ENCODE measurements at regions of chr19 and their contacts with region 1.

Region 1: DNA sequence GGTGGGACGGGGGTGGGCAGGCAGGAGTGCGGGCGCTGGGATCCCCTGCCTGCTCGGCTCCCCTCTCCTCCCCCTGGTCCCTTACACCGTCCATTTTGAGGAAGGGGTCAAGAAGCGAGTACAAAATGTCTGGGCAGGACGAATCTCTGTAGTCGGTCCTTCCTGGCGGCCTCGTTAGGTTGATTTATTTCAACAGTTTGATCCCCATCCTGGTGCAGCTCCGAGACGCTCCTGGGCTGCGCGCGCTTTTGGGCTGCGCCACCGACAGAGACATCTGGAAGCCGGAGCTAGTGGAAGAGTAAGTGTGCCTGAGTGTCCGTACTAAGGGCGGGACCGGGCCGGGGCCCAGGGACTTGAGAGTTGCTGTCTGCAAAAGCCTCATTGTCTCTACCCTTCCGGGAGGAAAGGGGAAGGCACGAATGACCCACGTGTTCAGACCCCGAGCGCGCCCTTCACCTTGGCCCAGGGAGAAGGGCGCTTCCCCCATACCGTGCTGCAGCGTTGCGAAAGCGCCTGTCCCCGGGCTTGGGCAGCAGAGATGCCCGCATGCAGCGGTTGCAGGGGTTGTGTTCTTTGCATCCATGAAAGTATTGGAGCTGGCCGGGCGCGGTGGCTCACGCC is 1.8 kb downstream of the ZNF114 start:
- DNase-seq: peak; percentile 47
- H3K4me3 ChIP-seq: peak overlapping the region; percentile 28 to 49 (median 45)
- H3K27ac ChIP-seq: peak overlapping the region; percentile 91
- H3K4me1 ChIP-seq: peaks cover 22% of the 10 kb centered on the region
- H3K27me3 ChIP-seq: no peaks in the 10 kb centered on the region
- CTCF ChIP-seq: no peak

Region 2: DNA sequence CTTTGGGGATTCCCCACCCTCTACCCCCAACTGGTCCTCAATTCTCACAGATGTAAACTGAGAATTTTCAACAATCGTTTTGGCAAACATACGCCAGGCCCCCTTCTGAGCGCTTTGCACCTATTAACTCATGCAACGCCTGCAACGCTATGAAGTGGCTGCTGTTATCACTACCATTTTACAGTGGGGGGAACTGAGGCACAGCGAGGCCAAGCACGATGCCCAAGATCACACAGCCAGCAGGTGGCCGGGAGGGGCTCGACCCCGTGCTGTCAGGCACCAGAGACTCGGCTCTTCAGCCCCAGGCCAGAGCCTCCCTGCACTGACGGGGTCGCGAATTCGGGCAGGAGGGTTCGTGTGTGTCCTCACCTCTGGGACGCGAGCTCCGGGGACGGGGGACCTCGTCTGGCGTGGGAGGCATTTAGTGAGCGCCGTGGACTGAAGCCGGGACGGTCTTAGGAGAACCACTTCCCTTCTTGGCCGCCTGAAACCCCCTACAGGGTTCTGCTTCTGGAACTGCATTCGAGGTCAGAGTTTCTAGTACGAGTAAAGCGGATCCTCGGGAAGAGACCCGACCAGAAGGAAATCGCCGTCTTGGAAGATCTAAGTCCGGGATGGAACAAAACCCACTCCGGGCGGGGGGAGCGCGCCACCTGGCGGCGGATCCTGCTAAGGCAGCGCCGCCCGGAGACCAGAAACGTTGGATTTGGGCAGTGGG is 19.3 kb after region 1 on chr19:
- CTCF ChIA-PET with region 1: interaction called, 5 read pairs
- dilution Hi-C with region 1: no loop called
- in situ Hi-C with region 1: no loop called
- intact Hi-C with region 1: loop called (anchors 1 kb)
- DNase-seq: peak; percentile 63
- H3K4me3 ChIP-seq: peak overlapping the region; percentile 49 to 61 (median 55)
- H3K27ac ChIP-seq: peak overlapping the region; percentile 42
- H3K4me1 ChIP-seq: peaks cover 18% of the 10 kb centered on the region
- H3K27me3 ChIP-seq: no peaks in the 10 kb centered on the region
- CTCF ChIP-seq: peak; percentile 89 to 98

Region 3: GRCh38 chr19:48308631-48309586 is 37.3 kb after region 1 on chr19:
- CTCF ChIA-PET with region 1: no interaction called
- dilution Hi-C with region 1: no loop called
- in situ Hi-C with region 1: no loop called
- intact Hi-C with region 1: loop called (anchors 1 kb)
- DNase-seq: no peak
- H3K4me3 ChIP-seq: no peak overlapping the region
- H3K27ac ChIP-seq: no peak overlapping the region
- H3K4me1 ChIP-seq: peaks cover 8% of the 10 kb centered on the region
- H3K27me3 ChIP-seq: no peaks in the 10 kb centered on the region
- CTCF ChIP-seq: peak in 1 of 2 donors; percentile 53

Region 4: GRCh38 chr19:48333467-48334384 is 62.1 kb after region 1 on chr19:
- CTCF ChIA-PET with region 1: interaction called, 3 read pairs
- dilution Hi-C with region 1: no loop called
- in situ Hi-C with region 1: no loop called
- intact Hi-C with region 1: loop called (anchors 1 kb)
- DNase-seq: peak; percentile 87
- H3K4me3 ChIP-seq: peak overlapping the region; percentile 15 to 48 (median 44)
- H3K27ac ChIP-seq: peak overlapping the region; percentile 45
- H3K4me1 ChIP-seq: peaks cover 35% of the 10 kb centered on the region
- H3K27me3 ChIP-seq: no peaks in the 10 kb centered on the region
- CTCF ChIP-seq: peak; percentile 54 to 89

Region 5: GRCh38 chr19:48391107-48391986 is 119.7 kb after region 1 on chr19 and contains the start of gene KDELR1:
- CTCF ChIA-PET with region 1: no interaction called
- dilution Hi-C with region 1: no loop called
- in situ Hi-C with region 1: no loop called
- intact Hi-C with region 1: loop called (anchors 5 kb)
- DNase-seq: peak; percentile 58
- H3K4me3 ChIP-seq: peak within 1 kb of the TSS; percentile 63 to 94 (median 93)
- H3K27ac ChIP-seq: peak within 1 kb of the TSS; percentile 87
- H3K4me1 ChIP-seq: peaks cover 12% of the 10 kb centered on the region
- H3K27me3 ChIP-seq: peaks cover 10% of the 10 kb centered on the region
- CTCF ChIP-seq: peak; percentile 70 to 95
- total RNA-seq, gene KDELR1: 73.2 to 171 TPM

Region 6: GRCh38 chr19:48492925-48493717 is 221.5 kb after region 1 on chr19:
- CTCF ChIA-PET with region 1: no interaction called
- dilution Hi-C with region 1: no loop called
- in situ Hi-C with region 1: no loop called
- intact Hi-C with region 1: loop called (anchors 5 kb)
- DNase-seq: peak; percentile 97
- H3K4me3 ChIP-seq: peak overlapping the region; percentile 46 to 86 (median 76)
- H3K27ac ChIP-seq: peak overlapping the region; percentile 47
- H3K4me1 ChIP-seq: peaks cover 23% of the 10 kb centered on the region
- H3K27me3 ChIP-seq: peaks cover 3% of the 10 kb centered on the region
- CTCF ChIP-seq: no peak

Measured in mammary epithelial cell (primary cell).